Activated B cell treated with CpG ODN at 0.5 μM for 24 hours (primary cell): ENCODE measurements at regions of chr21 and their contacts with region 1.

Region 1: DNA sequence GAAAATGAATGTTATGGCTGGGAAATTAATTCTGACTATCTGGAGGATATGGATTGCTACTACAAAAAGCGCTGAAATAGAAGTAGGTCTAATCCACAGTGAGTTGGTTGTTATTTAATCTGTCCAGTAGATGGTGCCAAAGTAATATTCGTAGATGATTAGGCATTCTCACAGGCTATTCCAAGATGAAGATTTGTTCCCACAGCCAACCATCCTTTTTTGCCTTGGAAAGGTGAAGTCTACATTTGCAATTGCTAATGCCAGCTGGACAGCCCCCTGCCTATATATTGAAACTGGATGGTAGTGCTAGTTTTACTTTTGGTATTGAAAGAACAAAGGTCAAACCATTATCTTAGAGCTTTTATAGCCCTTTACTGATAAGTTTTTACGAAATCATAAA is 43.8 kb downstream of the RBM11 start:
- DNase-seq: no peak
- ATAC-seq: no peak
- H3K4me3 Mint-ChIP-seq: no peak overlapping the region
- H3K27ac Mint-ChIP-seq: no peak overlapping the region
- H3K4me1 Mint-ChIP-seq: no peaks in the 10 kb centered on the region
- H3K27me3 Mint-ChIP-seq: peaks cover 2% of the 10 kb centered on the region
- CTCF ChIP-seq: no peak

Region 2: GRCh38 chr21:14143999-14144398 is 115.7 kb before region 1 on chr21:
- CTCF ChIA-PET with region 1: no interaction called
- POLR2A ChIA-PET with region 1: no interaction called
- intact Hi-C with region 1: no loop called
- DNase-seq: no peak
- ATAC-seq: no peak
- H3K4me3 Mint-ChIP-seq: no peak overlapping the region
- H3K27ac Mint-ChIP-seq: no peak overlapping the region
- H3K4me1 Mint-ChIP-seq: no peaks in the 10 kb centered on the region
- H3K27me3 Mint-ChIP-seq: peaks cover 2% of the 10 kb centered on the region
- CTCF ChIP-seq: no peak

Region 3: GRCh38 chr21:14403681-14404318 is 144.1 kb after region 1 on chr21:
- CTCF ChIA-PET with region 1: no interaction called
- POLR2A ChIA-PET with region 1: no interaction called
- intact Hi-C with region 1: loop called (anchors 5 kb)
- DNase-seq: no peak
- ATAC-seq: peak; percentile 57
- H3K4me3 Mint-ChIP-seq: no peak overlapping the region
- H3K27ac Mint-ChIP-seq: no peak overlapping the region
- H3K4me1 Mint-ChIP-seq: no peaks in the 10 kb centered on the region
- H3K27me3 Mint-ChIP-seq: no peaks in the 10 kb centered on the region
- CTCF ChIP-seq: peak; percentile 77

Region 4: DNA sequence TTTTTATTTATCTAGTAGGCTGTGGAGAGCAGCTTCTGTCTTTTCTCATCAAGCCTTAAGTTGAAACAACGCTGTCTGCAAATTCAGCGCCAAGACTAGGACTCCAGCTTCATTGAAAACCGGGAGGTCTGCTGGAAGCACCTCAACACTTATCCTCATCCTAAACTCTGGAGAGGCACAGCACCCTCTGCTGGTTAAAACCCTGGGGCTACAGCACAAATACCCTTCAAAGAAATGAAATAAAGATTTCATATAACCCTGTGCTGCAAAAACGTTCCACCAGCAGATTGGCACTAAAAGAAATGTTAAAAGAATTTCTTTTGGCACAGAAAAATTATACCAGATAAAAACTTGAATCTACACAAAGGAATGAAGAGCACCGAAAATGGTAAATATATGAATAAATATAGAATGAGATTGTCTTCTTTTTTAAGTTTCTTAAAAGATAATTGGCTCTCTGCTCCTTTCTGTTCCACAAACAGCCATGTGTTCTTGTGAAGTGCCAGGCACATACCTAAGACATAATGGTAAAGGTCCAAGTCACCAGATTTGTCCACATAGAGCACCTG is 514.1 kb after region 1 on chr21:
- CTCF ChIA-PET with region 1: interaction called, 7 read pairs
- POLR2A ChIA-PET with region 1: no interaction called
- intact Hi-C with region 1: loop called (anchors 1 kb)
- DNase-seq: peak; percentile 28
- ATAC-seq: peak; percentile 49
- H3K4me3 Mint-ChIP-seq: no peak overlapping the region
- H3K27ac Mint-ChIP-seq: no peak overlapping the region
- H3K4me1 Mint-ChIP-seq: peaks cover 9% of the 10 kb centered on the region
- H3K27me3 Mint-ChIP-seq: no peaks in the 10 kb centered on the region
- CTCF ChIP-seq: peak; percentile 26

Region 5: DNA sequence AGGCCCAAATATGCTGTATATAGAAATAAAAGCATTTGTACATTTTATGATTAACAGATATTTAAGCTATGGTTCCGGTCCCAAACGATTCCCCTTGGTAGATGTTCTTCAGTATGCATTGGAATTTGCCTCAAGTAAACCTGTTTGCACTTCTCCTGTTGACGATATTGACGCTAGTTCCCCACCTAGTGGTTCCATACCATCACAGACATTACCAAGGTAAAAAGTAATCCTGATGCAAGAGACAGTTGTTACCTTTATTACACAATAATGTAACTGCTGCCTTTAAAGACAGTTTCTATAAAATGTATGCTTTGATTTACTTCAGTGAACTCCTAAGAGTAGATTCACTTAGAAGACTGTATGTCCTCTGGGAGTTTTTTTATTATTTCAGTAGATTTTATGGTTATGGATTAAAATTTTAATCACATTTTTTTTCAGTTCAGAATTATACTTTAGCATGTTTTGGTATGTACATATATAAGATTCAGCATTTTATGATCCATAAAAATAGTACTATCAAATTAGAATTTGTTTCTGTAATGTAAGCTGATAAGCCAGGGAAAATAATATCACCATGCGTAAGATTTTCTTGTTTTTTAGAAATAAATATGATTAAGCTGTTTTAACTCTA is 1566.5 kb after region 1 on chr21:
- CTCF ChIA-PET with region 1: no interaction called
- POLR2A ChIA-PET with region 1: no interaction called
- intact Hi-C with region 1: loop called (anchors 1 kb)
- DNase-seq: no peak
- ATAC-seq: peak; percentile 45
- H3K4me3 Mint-ChIP-seq: no peak overlapping the region
- H3K27ac Mint-ChIP-seq: no peak overlapping the region
- H3K4me1 Mint-ChIP-seq: no peaks in the 10 kb centered on the region
- H3K27me3 Mint-ChIP-seq: no peaks in the 10 kb centered on the region
- CTCF ChIP-seq: no peak